CD4-positive, alpha-beta T cell (primary cell): ENCODE measurements at regions of chr2 and their contacts with region 1.

Region 1: GRCh38 chr2:203149194-203149593 is 89.6 kb upstream of the CYP20A1 start:
- DNase-seq: no peak
- ATAC-seq: no peak
- H3K4me3 ChIP-seq: no peak overlapping the region
- H3K4me3 Mint-ChIP-seq: no peak overlapping the region
- H3K27ac ChIP-seq: no peak overlapping the region
- H3K27ac Mint-ChIP-seq: no peak overlapping the region
- H3K4me1 ChIP-seq: no peaks in the 10 kb centered on the region
- H3K4me1 Mint-ChIP-seq: no peaks in the 10 kb centered on the region
- H3K27me3 ChIP-seq: no peaks in the 10 kb centered on the region
- H3K27me3 Mint-ChIP-seq: no peaks in the 10 kb centered on the region
- CTCF ChIP-seq: no peak

Region 2: DNA sequence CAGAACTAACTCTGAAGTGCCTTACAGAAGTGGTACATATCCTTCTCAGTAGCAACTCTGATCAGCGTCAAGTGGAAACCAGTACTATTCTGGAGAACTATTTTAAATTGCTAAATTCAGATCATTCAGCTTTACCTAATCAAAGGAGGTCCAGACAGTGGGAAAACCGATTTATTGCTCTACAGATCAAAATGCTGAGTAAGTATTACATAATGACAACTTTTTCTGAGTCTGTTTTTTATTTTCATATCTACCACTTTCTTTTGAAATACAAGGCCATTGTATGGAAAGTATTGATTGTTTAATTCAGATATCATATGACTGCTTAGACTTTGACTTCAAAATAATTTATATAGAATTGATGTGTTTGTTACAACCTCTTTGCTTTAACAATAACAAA is 65.9 kb before region 1 on chr2:
- CTCF ChIA-PET with region 1: no interaction called
- POLR2A ChIA-PET with region 1: no interaction called
- intact Hi-C with region 1: loop called in 1 of 2 experiments (anchors 2 kb)
- DNase-seq: no peak
- ATAC-seq: no peak
- H3K4me3 ChIP-seq: no peak overlapping the region
- H3K4me3 Mint-ChIP-seq: no peak overlapping the region
- H3K27ac ChIP-seq: no peak overlapping the region
- H3K27ac Mint-ChIP-seq: no peak overlapping the region
- H3K4me1 ChIP-seq: no peaks in the 10 kb centered on the region
- H3K4me1 Mint-ChIP-seq: no peaks in the 10 kb centered on the region
- H3K27me3 ChIP-seq: no peaks in the 10 kb centered on the region
- H3K27me3 Mint-ChIP-seq: no peaks in the 10 kb centered on the region
- CTCF ChIP-seq: no peak

Region 3: DNA sequence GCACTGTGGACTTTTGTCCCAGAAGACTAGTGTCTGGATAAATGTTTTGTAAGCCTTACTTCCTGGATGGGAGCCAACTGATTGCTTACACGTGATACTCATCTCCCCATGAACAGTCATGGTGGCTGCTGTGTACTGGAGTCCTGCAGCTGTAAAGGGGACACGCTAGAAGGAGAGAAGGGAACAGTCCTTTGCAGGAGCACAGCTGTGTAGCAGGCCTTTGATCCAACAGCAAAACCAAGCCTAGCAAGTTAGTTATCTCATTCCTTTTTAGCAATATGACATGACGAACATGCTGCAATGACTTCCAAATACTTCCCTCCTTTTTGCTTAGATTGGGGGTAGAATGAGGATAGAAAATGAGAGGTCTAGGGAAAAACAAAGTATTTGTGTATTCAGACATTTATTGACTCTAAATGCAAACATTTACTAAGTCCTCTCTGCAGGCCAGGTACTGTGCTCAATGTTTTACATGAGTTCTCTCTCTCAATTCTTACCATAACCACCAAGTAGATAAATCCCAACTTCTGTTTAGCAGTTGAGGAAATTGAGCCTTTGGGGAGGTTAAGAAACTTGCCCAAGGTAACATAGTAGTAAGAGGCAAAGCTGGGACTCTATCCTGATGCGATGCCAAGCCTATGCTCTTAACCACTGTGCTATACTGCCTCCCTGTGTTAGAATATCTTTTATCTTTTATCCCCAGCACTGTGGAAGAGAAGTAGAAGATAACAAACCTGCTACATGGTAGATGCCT is 501.8 kb after region 1 on chr2:
- CTCF ChIA-PET with region 1: no interaction called
- POLR2A ChIA-PET with region 1: no interaction called
- intact Hi-C with region 1: no loop called
- DNase-seq: peak in 3 of 14 experiments; percentile 36 to 45 (median 38)
- ATAC-seq: no peak
- H3K4me3 ChIP-seq: no peak overlapping the region
- H3K4me3 Mint-ChIP-seq: no peak overlapping the region
- H3K27ac ChIP-seq: no peak overlapping the region
- H3K27ac Mint-ChIP-seq: no peak overlapping the region
- H3K4me1 ChIP-seq: no peaks in the 10 kb centered on the region
- H3K4me1 Mint-ChIP-seq: peaks cover 29% of the 10 kb centered on the region
- H3K27me3 ChIP-seq: no peaks in the 10 kb centered on the region
- H3K27me3 Mint-ChIP-seq: no peaks in the 10 kb centered on the region
- CTCF ChIP-seq: no peak